ENCODE measurements at regions of chr4 and their contacts with region 1.

Region 1: DNA sequence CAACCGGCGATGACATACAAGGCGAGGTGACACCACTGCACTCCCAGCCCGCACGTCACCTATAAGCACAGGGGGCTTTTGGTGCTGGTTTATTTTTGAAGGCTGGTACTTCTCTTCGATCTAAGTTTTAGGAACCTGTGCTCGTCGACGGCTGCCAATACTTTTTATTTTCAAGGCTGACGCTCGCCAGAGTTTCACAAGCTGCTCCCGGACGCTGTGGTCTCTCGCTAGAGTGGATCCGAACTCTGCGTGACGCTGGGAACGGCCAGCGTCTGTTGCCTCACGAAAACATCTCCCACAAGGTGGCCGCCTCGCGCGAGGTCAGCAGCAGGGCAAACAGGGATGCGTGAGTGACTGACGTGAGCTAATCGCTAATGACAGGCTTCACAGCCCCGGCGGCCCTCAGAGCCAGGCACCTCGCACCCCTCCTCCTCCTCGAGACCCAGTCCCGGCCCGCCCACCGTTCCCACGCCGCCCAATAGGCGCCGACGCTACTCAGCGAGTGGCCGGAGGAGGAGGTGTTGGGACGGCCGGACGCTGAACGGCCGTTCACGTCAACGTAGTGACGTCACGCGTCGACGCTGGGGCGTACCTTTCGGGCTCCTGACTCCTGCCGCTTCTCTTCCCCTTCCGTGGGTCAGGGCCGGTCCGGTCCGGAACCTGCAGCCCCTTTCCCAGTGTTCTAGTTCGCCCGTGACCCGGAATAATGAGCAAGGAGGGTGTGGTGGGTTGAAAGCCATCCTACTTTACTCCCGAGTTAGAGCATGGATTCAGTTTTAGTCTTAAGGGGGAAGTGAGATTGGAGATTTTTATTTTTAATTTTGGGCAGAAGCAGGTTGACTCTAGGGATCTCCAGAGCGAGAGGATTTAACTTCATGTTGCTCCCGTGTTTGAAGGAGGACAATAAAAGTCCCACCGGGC is at the start of gene CLCN3:
- DNase-seq: peak; percentile 99
- total RNA-seq, gene CLCN3: 61.4 TPM

Region 2: GRCh38 chr4:169160825-169161224 is 459.4 kb before region 1 on chr4:
- intact Hi-C with region 1: no loop called
- DNase-seq: no peak

Region 3: DNA sequence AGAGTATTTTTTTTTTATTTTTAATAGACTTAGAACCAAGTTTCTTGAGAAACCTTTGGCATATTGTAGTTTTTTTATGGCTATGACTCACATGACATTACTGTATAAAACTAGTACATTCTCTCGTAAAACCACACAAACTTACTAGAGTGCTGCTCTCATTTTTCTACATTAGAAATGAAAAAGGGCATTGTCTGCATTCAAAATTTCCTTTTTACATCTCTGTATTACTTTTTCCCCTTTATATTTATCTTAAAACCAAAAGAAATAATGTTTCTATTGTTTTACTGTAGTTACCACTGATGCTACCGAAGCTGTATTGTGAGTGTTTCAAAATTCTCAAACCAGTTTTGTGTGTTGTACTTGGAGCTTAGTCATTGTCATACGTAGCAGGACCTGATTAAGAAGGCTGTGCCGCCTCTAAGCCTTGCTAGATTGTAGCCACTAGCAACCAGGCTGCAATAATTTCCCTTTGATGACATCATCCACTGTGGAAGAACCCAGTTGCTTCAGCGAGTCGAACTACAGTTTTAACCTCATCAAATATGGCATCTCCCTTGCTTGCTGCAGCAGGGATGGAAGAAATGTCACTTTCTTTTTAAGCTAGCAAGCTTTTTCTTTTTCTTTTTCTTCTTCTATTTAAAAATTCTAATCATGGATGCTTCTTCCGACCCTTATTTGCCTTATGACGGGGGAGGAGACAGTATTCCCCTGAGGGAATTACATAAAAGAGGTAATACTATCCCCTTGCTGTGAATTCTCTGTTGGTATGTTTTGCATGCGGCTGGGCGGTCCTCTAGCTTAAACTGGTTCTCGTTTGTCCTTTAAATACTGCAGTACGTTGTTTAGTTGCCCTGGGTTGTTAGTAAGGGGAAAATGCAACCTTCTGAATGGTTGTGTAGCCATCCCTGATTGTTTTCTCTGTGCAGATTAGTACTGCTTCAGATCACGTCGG is 39.8 kb after region 1 on chr4:
- intact Hi-C with region 1: loop called (anchors 1 kb)
- DNase-seq: peak; percentile 79

Region 4: GRCh38 chr4:169707958-169708643 is 87.9 kb after region 1 on chr4:
- intact Hi-C with region 1: loop called (anchors 5 kb)
- DNase-seq: no peak

Region 5: GRCh38 chr4:169723207-169723965 is 103.2 kb after region 1 on chr4:
- intact Hi-C with region 1: loop called (anchors 5 kb)
- DNase-seq: no peak

Region 6: GRCh38 chr4:170428929-170429328 is 808.7 kb after region 1 on chr4:
- intact Hi-C with region 1: no loop called
- DNase-seq: no peak

Measured in cardiac septum (tissue), 1 donor.